Right ventricle myocardium inferior (tissue), 1 donor: ENCODE measurements at regions of chr5 and their contacts with region 1.

Region 1: DNA sequence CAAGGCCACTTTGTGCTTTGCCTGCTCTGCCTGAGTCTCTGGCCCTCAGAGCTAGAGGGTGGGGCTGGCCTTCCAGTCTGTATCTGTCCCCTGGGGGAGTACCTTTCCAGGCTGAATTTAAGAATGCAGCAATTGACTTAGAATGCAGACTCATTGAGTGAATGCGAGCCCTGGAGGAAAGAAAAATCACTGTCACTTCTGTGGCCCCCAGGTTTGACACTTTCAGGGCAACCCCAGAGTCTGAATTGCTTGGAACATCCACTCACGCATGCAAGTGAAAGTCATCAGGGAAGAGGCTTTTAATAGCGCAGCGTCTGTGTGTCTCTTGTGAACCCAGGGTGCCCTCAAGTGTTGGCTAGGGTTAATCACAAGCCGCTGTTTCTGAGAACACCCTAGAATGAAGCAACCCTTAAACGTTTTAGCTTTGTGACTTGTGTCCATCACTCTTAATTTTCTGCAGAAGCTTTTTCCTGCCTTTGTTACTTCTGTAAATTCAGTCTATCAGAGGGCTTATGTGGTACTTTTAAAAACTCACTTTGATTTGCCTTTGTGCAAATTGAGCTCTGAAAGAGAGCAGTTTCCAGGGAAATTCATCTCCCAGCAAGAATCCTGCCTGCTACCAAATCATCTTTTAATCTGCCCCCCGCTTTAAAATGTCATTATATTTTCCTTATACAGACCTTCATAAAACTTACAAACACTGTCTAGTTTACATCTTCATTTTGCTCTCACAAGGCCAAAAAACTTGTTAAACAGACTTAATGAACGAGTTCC is 146.8 kb upstream of the IQGAP2 start:
- DNase-seq: no peak
- ATAC-seq: peak; percentile 90

Region 2: GRCh38 chr5:75053304-75054133 is 1202.8 kb before region 1 on chr5:
- intact Hi-C with region 1: loop called (anchors 5 kb)
- DNase-seq: peak; percentile 75
- ATAC-seq: peak; percentile 58

Region 3: GRCh38 chr5:75734913-75735789 is 521.2 kb before region 1 on chr5:
- intact Hi-C with region 1: loop called (anchors 5 kb)
- DNase-seq: no peak
- ATAC-seq: no peak